CD4-positive, alpha-beta memory T cell (primary cell): ENCODE measurements at regions of chr2 and their contacts with region 1.

Region 1: GRCh38 chr2:172484253-172484652 is 56.9 kb downstream of the ITGA6 start:
- DNase-seq: peak in 4 of 5 donors; percentile 25 to 34 (median 32)
- H3K4me3 ChIP-seq: no peak overlapping the region
- H3K4me3 Mint-ChIP-seq: no peak overlapping the region
- H3K27ac ChIP-seq: no peak overlapping the region
- H3K27ac Mint-ChIP-seq: peak overlapping the region in 5 of 7 donors; percentile 23 to 76 (median 66)
- H3K4me1 ChIP-seq: peaks cover 6% of the 10 kb centered on the region
- H3K4me1 Mint-ChIP-seq: peaks cover 26 to 51% (median 34%) of the 10 kb centered on the region in 4 donors
- H3K27me3 ChIP-seq: no peaks in the 10 kb centered on the region
- H3K27me3 Mint-ChIP-seq: no peaks in the 10 kb centered on the region

Region 2: DNA sequence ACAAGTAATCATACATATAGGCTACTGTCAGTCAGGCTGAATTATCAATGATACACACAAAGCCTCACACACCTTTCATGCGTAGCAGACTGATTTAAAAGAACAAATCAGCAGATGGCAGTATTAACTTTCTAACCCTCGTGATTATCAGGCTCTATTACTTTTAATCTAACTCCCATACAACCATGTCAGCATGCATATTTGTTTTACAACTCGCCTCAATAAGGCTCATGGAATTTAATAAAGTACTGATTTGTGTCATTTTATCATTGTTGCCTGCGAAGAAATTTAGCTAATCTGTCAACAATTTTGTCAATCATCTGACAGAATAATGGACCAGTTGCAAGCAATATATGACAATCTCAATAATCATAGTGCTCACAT is 673.0 kb before region 1 on chr2:
- CTCF ChIA-PET with region 1: no interaction called
- POLR2A ChIA-PET with region 1: no interaction called
- intact Hi-C with region 1: loop called (anchors 5 kb)
- DNase-seq: peak in 4 of 5 donors; percentile 3 to 14 (median 8)
- H3K4me3 ChIP-seq: no peak overlapping the region
- H3K4me3 Mint-ChIP-seq: no peak overlapping the region
- H3K27ac ChIP-seq: no peak overlapping the region
- H3K27ac Mint-ChIP-seq: no peak overlapping the region
- H3K4me1 ChIP-seq: no peaks in the 10 kb centered on the region
- H3K4me1 Mint-ChIP-seq: no peaks in the 10 kb centered on the region
- H3K27me3 ChIP-seq: no peaks in the 10 kb centered on the region
- H3K27me3 Mint-ChIP-seq: no peaks in the 10 kb centered on the region

Region 3: DNA sequence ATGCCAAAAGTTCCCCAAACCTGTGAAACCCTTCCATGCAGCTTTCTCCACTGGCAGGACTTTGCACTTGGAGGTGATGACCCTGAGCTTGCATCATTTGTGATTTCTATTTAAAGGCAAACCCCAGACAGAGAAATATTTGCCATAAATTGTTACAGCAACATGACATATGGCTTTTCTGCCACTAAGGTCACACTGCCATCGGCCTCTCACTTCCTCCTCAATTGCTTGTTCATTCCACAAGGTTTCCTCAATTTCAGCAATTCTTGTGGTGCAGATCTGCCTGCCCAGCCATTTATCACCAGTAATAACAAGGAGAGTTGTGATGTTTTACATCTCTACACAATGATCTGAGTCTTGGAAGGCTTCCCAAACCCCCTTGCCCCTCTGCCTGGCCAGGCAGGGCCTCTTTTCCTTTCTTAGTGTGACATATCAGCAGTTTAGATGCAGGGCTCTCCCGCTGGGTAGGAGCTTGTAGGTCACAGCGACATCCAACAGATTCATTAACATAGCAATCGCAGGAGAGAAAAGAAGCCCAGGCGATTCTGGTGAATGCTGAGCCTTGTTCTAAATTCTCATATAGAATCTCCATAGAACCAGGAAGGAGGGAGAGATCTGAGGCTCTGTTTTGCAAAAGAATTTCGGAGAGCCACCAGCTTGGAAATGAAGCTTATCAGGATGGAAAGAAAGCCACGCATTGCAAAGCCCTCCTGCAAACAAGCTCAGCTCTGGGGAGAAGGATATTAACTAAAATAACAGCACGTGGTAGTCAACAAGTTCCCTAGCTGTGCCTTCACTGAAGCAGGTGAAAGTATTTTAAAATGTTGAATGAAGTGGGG is 103.6 kb before region 1 on chr2:
- CTCF ChIA-PET with region 1: no interaction called
- POLR2A ChIA-PET with region 1: no interaction called
- intact Hi-C with region 1: no loop called
- DNase-seq: no peak
- H3K4me3 ChIP-seq: no peak overlapping the region
- H3K4me3 Mint-ChIP-seq: no peak overlapping the region
- H3K27ac ChIP-seq: no peak overlapping the region
- H3K27ac Mint-ChIP-seq: no peak overlapping the region
- H3K4me1 ChIP-seq: no peaks in the 10 kb centered on the region
- H3K4me1 Mint-ChIP-seq: no peaks in the 10 kb centered on the region
- H3K27me3 ChIP-seq: no peaks in the 10 kb centered on the region
- H3K27me3 Mint-ChIP-seq: peaks cover 1 to 3% of the 10 kb centered on the region in 2 donors

Region 4: GRCh38 chr2:172496160-172496608 is 11.9 kb after region 1 on chr2:
- CTCF ChIA-PET with region 1: interaction called, 26 read pairs
- POLR2A ChIA-PET with region 1: interaction called, 21 read pairs
- intact Hi-C with region 1: no loop called
- DNase-seq: peak; percentile 34 to 65 (median 58)
- H3K4me3 ChIP-seq: peak overlapping the region in 1 of 2 donors; percentile 33
- H3K4me3 Mint-ChIP-seq: peak overlapping the region; percentile 72 to 84 (median 78)
- H3K27ac ChIP-seq: peak overlapping the region; percentile 12
- H3K27ac Mint-ChIP-seq: peak overlapping the region; percentile 78 to 96 (median 94)
- H3K4me1 ChIP-seq: peaks cover 62% of the 10 kb centered on the region
- H3K4me1 Mint-ChIP-seq: peaks cover 39 to 75% (median 58%) of the 10 kb centered on the region in 4 donors
- H3K27me3 ChIP-seq: no peaks in the 10 kb centered on the region
- H3K27me3 Mint-ChIP-seq: no peaks in the 10 kb centered on the region